ENCODE measurements at regions of chr1 and their contacts with region 1.

Region 1: GRCh38 chr1:110460253-110461220 is 9.6 kb downstream of the PROK1 start:
- DNase-seq: peak; percentile 78 to 90 (median 86)
- H3K4me3 ChIP-seq: no peak overlapping the region
- H3K27ac ChIP-seq: no peak overlapping the region
- H3K4me1 ChIP-seq: peaks cover 5% of the 10 kb centered on the region
- H3K27me3 ChIP-seq: no peaks in the 10 kb centered on the region
- CTCF ChIP-seq: peak; percentile 89 to 97 (median 94)
- EP300 ChIP-seq: no peak
- POLR2A ChIP-seq: no peak

Region 2: GRCh38 chr1:110209715-110210603 is 250.6 kb before region 1 on chr1 and contains the start of gene KCNC4:
- intact Hi-C with region 1: loop called in 3 of 4 experiments (anchors 2 to 5 kb)
- DNase-seq: peak; percentile 82 to 87 (median 86)
- H3K4me3 ChIP-seq: peak within 1 kb of the TSS; percentile 66
- H3K27ac ChIP-seq: peak within 1 kb of the TSS; percentile 70 to 80
- H3K4me1 ChIP-seq: peaks cover 13% of the 10 kb centered on the region
- H3K27me3 ChIP-seq: no peaks in the 10 kb centered on the region
- CTCF ChIP-seq: no peak
- EP300 ChIP-seq: no peak
- POLR2A ChIP-seq: peak; percentile 35
- total RNA-seq, gene KCNC4: 5.5 to 18.0 (median 14.2) TPM

Region 3: GRCh38 chr1:110338886-110339406 is 121.6 kb before region 1 on chr1 and contains the start of gene RBM15:
- intact Hi-C with region 1: loop called in 1 of 4 experiments (anchors 10 kb)
- DNase-seq: peak; percentile 97 to 99 (median 98)
- H3K4me3 ChIP-seq: peak within 1 kb of the TSS; percentile 96
- H3K27ac ChIP-seq: peak within 1 kb of the TSS; percentile 96 to 98
- H3K4me1 ChIP-seq: peaks cover 13% of the 10 kb centered on the region
- H3K27me3 ChIP-seq: no peaks in the 10 kb centered on the region
- CTCF ChIP-seq: no peak
- EP300 ChIP-seq: no peak
- POLR2A ChIP-seq: no peak
- total RNA-seq, gene RBM15: 21.2 to 28.7 (median 26.2) TPM

Region 4: DNA sequence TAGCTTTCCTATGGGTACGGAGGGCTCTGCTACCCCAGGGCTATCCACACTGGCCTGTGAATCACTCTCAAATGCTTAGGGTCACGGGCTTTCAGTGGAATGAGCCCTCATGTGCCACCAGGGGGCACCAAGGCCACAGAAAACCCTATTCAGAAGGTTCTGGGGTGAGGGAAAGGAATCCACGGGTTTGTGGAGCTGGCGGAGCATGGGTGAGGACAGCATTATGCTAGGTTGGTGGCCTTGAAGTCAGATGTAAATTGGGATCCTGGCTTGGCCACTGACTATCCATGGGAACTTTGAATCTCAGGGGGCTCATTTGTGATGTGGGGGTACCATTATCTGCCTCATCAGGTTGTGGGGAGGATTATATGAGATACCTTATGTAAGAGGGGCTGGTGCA is 48.0 kb before region 1 on chr1:
- intact Hi-C with region 1: loop called in 3 of 4 experiments (anchors 2 to 5 kb)
- DNase-seq: peak; percentile 87 to 93 (median 90)
- H3K4me3 ChIP-seq: no peak overlapping the region
- H3K27ac ChIP-seq: peak overlapping the region; percentile 61 to 76
- H3K4me1 ChIP-seq: peaks cover 16% of the 10 kb centered on the region
- H3K27me3 ChIP-seq: no peaks in the 10 kb centered on the region
- CTCF ChIP-seq: peak; percentile 68 to 92 (median 91)
- EP300 ChIP-seq: no peak
- POLR2A ChIP-seq: peak; percentile 29

Region 5: DNA sequence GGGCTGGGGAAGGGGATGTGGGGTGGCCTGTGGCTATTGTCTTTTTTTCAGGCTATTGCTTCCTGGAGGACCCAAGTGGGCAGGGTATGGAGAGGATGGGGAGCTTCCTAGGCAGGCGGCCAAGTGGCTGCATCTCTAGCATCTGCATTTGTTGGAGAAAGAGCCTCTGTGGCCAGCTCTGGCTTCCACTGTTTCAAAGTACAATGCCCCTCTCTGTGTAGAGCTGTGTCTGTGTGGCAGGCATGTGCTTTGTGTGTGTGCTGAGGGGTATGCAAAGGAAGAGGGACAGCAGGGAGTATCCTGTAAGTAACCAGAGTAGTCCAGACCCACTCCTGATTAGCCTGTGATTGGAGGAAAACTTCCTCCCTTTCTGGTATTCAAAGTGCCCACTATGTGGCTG is 105.0 kb after region 1 on chr1:
- intact Hi-C with region 1: no loop called
- DNase-seq: no peak
- H3K4me3 ChIP-seq: no peak overlapping the region
- H3K27ac ChIP-seq: no peak overlapping the region
- H3K4me1 ChIP-seq: no peaks in the 10 kb centered on the region
- H3K27me3 ChIP-seq: no peaks in the 10 kb centered on the region
- CTCF ChIP-seq: no peak
- EP300 ChIP-seq: no peak
- POLR2A ChIP-seq: no peak